B cell (primary cell): ENCODE measurements at regions of chr1 and their contacts with region 1.

Region 1: DNA sequence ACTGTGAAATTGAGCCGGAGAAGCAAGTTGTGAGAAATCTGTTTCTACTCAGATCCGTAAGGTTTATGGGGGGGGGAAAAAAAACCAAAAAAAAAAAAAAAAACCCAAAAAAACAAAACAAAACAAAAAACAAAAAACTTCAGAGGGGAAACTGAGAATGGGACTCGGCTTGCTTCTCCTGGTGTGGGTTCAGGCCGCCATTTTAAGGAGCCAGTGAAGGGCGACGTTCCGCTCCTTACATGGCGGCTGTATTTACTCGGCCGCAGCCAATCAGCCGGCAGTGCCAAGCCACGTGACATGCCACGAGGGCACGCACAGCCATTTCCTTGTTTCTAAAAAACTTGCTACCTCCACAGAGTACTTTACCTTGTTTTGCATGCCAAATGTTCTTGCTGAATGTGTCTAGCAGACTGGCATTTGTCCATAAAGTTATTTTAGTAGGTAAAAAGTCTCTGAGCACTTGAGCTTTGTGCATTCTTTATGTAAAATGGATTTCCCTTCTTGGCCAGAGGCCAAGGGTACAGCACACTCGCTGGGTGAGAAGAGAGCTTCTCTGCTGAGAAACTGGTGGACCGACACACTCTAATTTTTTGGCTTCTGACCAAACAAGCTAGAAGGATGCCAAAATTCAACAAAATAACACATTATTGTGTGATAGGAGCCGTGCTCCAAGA is 101.8 kb downstream of the NFIA start:
- DNase-seq: no peak
- ATAC-seq: no peak
- H3K4me3 ChIP-seq: no peak overlapping the region
- H3K4me3 Mint-ChIP-seq: no peak overlapping the region
- H3K27ac ChIP-seq: no peak overlapping the region
- H3K27ac Mint-ChIP-seq: no peak overlapping the region
- H3K4me1 ChIP-seq: no peaks in the 10 kb centered on the region
- H3K4me1 Mint-ChIP-seq: no peaks in the 10 kb centered on the region
- H3K27me3 ChIP-seq: no peaks in the 10 kb centered on the region
- H3K27me3 Mint-ChIP-seq: peaks cover 8% of the 10 kb centered on the region
- CTCF ChIP-seq: no peak

Region 2: GRCh38 chr1:61158591-61158990 is 25.6 kb before region 1 on chr1:
- CTCF ChIA-PET with region 1: no interaction called
- POLR2A ChIA-PET with region 1: interaction called, 18 read pairs
- intact Hi-C with region 1: no loop called
- DNase-seq: no peak
- ATAC-seq: no peak
- H3K4me3 ChIP-seq: no peak overlapping the region
- H3K4me3 Mint-ChIP-seq: no peak overlapping the region
- H3K27ac ChIP-seq: no peak overlapping the region
- H3K27ac Mint-ChIP-seq: no peak overlapping the region
- H3K4me1 ChIP-seq: no peaks in the 10 kb centered on the region
- H3K4me1 Mint-ChIP-seq: no peaks in the 10 kb centered on the region
- H3K27me3 ChIP-seq: no peaks in the 10 kb centered on the region
- H3K27me3 Mint-ChIP-seq: no peaks in the 10 kb centered on the region
- CTCF ChIP-seq: no peak